ENCODE measurements at regions of chr7 and their contacts with region 1.

Region 1: GRCh38 chr7:140607441-140607989 is 33.1 kb downstream of the DENND2A start:
- DNase-seq: no peak
- ATAC-seq: no peak
- H3K4me3 ChIP-seq: no peak overlapping the region
- H3K4me3 Mint-ChIP-seq: no peak overlapping the region
- H3K27ac ChIP-seq: no peak overlapping the region
- H3K27ac Mint-ChIP-seq: no peak overlapping the region
- H3K4me1 ChIP-seq: no peaks in the 10 kb centered on the region
- H3K4me1 Mint-ChIP-seq: no peaks in the 10 kb centered on the region
- H3K27me3 ChIP-seq: peaks cover 0 to 8% of the 10 kb centered on the region in 2 experiments
- H3K27me3 Mint-ChIP-seq: peaks cover 0 to 6% of the 10 kb centered on the region in 2 donors

Region 2: DNA sequence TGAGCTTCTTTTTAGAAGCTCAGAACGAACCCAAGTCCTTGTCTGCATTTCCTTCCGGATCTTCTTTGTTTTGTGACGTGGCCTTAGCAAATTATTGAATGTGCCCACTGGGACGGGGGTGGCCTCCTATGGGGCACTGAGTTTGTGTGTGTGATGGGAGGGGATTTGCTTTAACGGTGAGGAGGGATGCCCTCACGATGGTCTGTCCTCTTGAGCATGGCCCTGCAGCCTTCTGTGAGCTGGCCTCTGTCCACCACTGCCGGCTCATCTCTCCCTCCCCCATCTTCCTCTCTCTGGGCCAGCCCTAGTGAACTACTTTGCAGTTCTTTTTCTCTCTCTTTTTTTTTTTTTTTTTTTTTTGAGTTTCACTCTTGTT is 65.3 kb before region 1 on chr7:
- CTCF ChIA-PET with region 1: no interaction called
- POLR2A ChIA-PET with region 1: interaction called in 1 of 2 experiments, 10 read pairs
- DNase-seq: no peak
- ATAC-seq: no peak
- H3K4me3 ChIP-seq: no peak overlapping the region
- H3K4me3 Mint-ChIP-seq: no peak overlapping the region
- H3K27ac ChIP-seq: no peak overlapping the region
- H3K27ac Mint-ChIP-seq: no peak overlapping the region
- H3K4me1 ChIP-seq: no peaks in the 10 kb centered on the region
- H3K4me1 Mint-ChIP-seq: peaks cover 0 to 5% (median 4%) of the 10 kb centered on the region in 3 donors
- H3K27me3 ChIP-seq: peaks cover 0 to 31% of the 10 kb centered on the region in 2 experiments
- H3K27me3 Mint-ChIP-seq: peaks cover 4 to 25% of the 10 kb centered on the region in 2 donors

Region 3: GRCh38 chr7:141436575-141437075 is 829.1 kb after region 1 on chr7:
- CTCF ChIA-PET with region 1: no interaction called
- POLR2A ChIA-PET with region 1: no interaction called
- DNase-seq: no peak
- ATAC-seq: no peak
- H3K4me3 ChIP-seq: no peak overlapping the region
- H3K4me3 Mint-ChIP-seq: no peak overlapping the region
- H3K27ac ChIP-seq: no peak overlapping the region
- H3K27ac Mint-ChIP-seq: no peak overlapping the region
- H3K4me1 ChIP-seq: no peaks in the 10 kb centered on the region
- H3K4me1 Mint-ChIP-seq: no peaks in the 10 kb centered on the region
- H3K27me3 ChIP-seq: peaks cover 0 to 18% of the 10 kb centered on the region in 2 experiments
- H3K27me3 Mint-ChIP-seq: peaks cover 14 to 17% of the 10 kb centered on the region in 2 donors